ENCODE measurements at regions of chr17 and their contacts with region 1.

Region 1: GRCh38 chr17:49315551-49316257 is 46.3 kb downstream of the ZNF652 start:
- DNase-seq: peak; percentile 58 to 75 (median 64)
- ATAC-seq: peak; percentile 93
- H3K4me3 ChIP-seq: no peak overlapping the region
- H3K27ac ChIP-seq: no peak overlapping the region
- H3K4me1 ChIP-seq: no peaks in the 10 kb centered on the region
- H3K27me3 ChIP-seq: no peaks in the 10 kb centered on the region
- CTCF ChIP-seq: peak; percentile 73 to 93 (median 80)
- EP300 ChIP-seq: 0 out of 2 replicates have a peak, but pooled peaks have one; percentile 3
- POLR2A ChIP-seq: no peak
- RAD21 ChIP-seq: peak; percentile 90 to 94

Region 2: GRCh38 chr17:49239963-49240362 is 75.7 kb before region 1 on chr17:
- CTCF ChIA-PET with region 1: no interaction called
- POLR2A ChIA-PET with region 1: no interaction called
- in situ Hi-C with region 1: no loop called
- intact Hi-C with region 1: no loop called
- DNase-seq: no peak
- ATAC-seq: no peak
- H3K4me3 ChIP-seq: no peak overlapping the region
- H3K27ac ChIP-seq: no peak overlapping the region
- H3K4me1 ChIP-seq: peaks cover 11 to 15% of the 10 kb centered on the region in 2 experiments; a peak in 4 of 5 replicates
- H3K27me3 ChIP-seq: no peaks in the 10 kb centered on the region
- CTCF ChIP-seq: no peak
- EP300 ChIP-seq: no peak
- POLR2A ChIP-seq: no peak
- RAD21 ChIP-seq: no peak

Region 3: GRCh38 chr17:49390548-49391324 is 75.0 kb after region 1 on chr17:
- CTCF ChIA-PET with region 1: interaction called, 83 read pairs
- POLR2A ChIA-PET with region 1: interaction called, 3 read pairs
- in situ Hi-C with region 1: loop called (anchors 5 kb)
- intact Hi-C with region 1: loop called (anchors 1 kb)
- DNase-seq: peak; percentile 37 to 74 (median 60)
- ATAC-seq: peak; percentile 77
- H3K4me3 ChIP-seq: peak overlapping the region; percentile 25
- H3K27ac ChIP-seq: peak overlapping the region; percentile 65
- H3K4me1 ChIP-seq: peaks cover 20 to 38% of the 10 kb centered on the region in 2 experiments
- H3K27me3 ChIP-seq: no peaks in the 10 kb centered on the region
- CTCF ChIP-seq: no peak
- EP300 ChIP-seq: no peak
- POLR2A ChIP-seq: peak; percentile 43; the same call in 1 of the 2 replicates
- RAD21 ChIP-seq: no peak

Region 4: GRCh38 chr17:49399995-49400394 is 84.3 kb after region 1 on chr17:
- CTCF ChIA-PET with region 1: interaction called, 83 read pairs
- POLR2A ChIA-PET with region 1: interaction called, 3 read pairs
- in situ Hi-C with region 1: no loop called
- intact Hi-C with region 1: loop called (anchors 1 kb)
- DNase-seq: no peak
- ATAC-seq: no peak
- H3K4me3 ChIP-seq: no peak overlapping the region
- H3K27ac ChIP-seq: no peak overlapping the region
- H3K4me1 ChIP-seq: no peaks in the 10 kb centered on the region; a peak in 1 of 5 replicates
- H3K27me3 ChIP-seq: no peaks in the 10 kb centered on the region; a peak in 1 of 5 replicates
- CTCF ChIP-seq: no peak
- EP300 ChIP-seq: no peak
- POLR2A ChIP-seq: no peak
- RAD21 ChIP-seq: no peak

Region 5: GRCh38 chr17:49523706-49524472 is 208.2 kb after region 1 on chr17:
- CTCF ChIA-PET with region 1: no interaction called
- POLR2A ChIA-PET with region 1: no interaction called
- in situ Hi-C with region 1: no loop called
- intact Hi-C with region 1: no loop called
- DNase-seq: no peak
- ATAC-seq: no peak
- H3K4me3 ChIP-seq: no peak overlapping the region
- H3K27ac ChIP-seq: no peak overlapping the region
- H3K4me1 ChIP-seq: no peaks in the 10 kb centered on the region
- H3K27me3 ChIP-seq: peaks cover 35 to 80% of the 10 kb centered on the region in 2 experiments
- CTCF ChIP-seq: no peak
- EP300 ChIP-seq: no peak
- POLR2A ChIP-seq: no peak
- RAD21 ChIP-seq: no peak

Measured in K562 (cell line).